ENCODE measurements at regions of chr12 and their contacts with region 1.

Region 1: GRCh38 chr12:98516184-98516873 is 939 bp downstream of the TMPO start:
- DNase-seq: peak; percentile 83 to 93 (median 88)
- H3K4me3 ChIP-seq: peak overlapping the region; percentile 78 to 98
- H3K4me3 Mint-ChIP-seq: peak overlapping the region; percentile 96 to 100 (median 100)
- H3K27ac ChIP-seq: peak overlapping the region; percentile 94
- H3K27ac Mint-ChIP-seq: peak overlapping the region; percentile 97 to 100 (median 99)
- H3K4me1 ChIP-seq: peaks cover 64% of the 10 kb centered on the region
- H3K4me1 Mint-ChIP-seq: peaks cover 26 to 78% (median 47%) of the 10 kb centered on the region in 4 donors
- H3K27me3 ChIP-seq: no peaks in the 10 kb centered on the region
- H3K27me3 Mint-ChIP-seq: peaks cover 0 to 3% of the 10 kb centered on the region in 2 donors

Region 2: GRCh38 chr12:98424726-98425401 is 91.5 kb before region 1 on chr12:
- CTCF ChIA-PET with region 1: interaction called, 4 read pairs
- POLR2A ChIA-PET with region 1: interaction called, 4 read pairs
- intact Hi-C with region 1: loop called (anchors 1 kb)
- DNase-seq: peak in 4 of 5 donors; percentile 35 to 46 (median 40)
- H3K4me3 ChIP-seq: no peak overlapping the region
- H3K4me3 Mint-ChIP-seq: no peak overlapping the region
- H3K27ac ChIP-seq: no peak overlapping the region
- H3K27ac Mint-ChIP-seq: no peak overlapping the region
- H3K4me1 ChIP-seq: no peaks in the 10 kb centered on the region
- H3K4me1 Mint-ChIP-seq: peaks cover 0 to 3% (median 0%) of the 10 kb centered on the region in 4 donors
- H3K27me3 ChIP-seq: no peaks in the 10 kb centered on the region
- H3K27me3 Mint-ChIP-seq: peaks cover 3% of the 10 kb centered on the region in 2 donors

Region 3: GRCh38 chr12:98503592-98504367 is 12.5 kb before region 1 on chr12:
- CTCF ChIA-PET with region 1: interaction called, 14 read pairs
- POLR2A ChIA-PET with region 1: interaction called, 175 read pairs
- intact Hi-C with region 1: loop called (anchors 1 kb)
- DNase-seq: peak; percentile 90 to 94 (median 93)
- H3K4me3 ChIP-seq: peak overlapping the region; percentile 72 to 93
- H3K4me3 Mint-ChIP-seq: peak overlapping the region; percentile 95 to 99 (median 98)
- H3K27ac ChIP-seq: peak overlapping the region; percentile 85
- H3K27ac Mint-ChIP-seq: peak overlapping the region; percentile 98 to 100 (median 100)
- H3K4me1 ChIP-seq: peaks cover 16% of the 10 kb centered on the region
- H3K4me1 Mint-ChIP-seq: peaks cover 17 to 42% (median 29%) of the 10 kb centered on the region in 4 donors
- H3K27me3 ChIP-seq: no peaks in the 10 kb centered on the region
- H3K27me3 Mint-ChIP-seq: peaks cover 4 to 15% of the 10 kb centered on the region in 2 donors

Region 4: DNA sequence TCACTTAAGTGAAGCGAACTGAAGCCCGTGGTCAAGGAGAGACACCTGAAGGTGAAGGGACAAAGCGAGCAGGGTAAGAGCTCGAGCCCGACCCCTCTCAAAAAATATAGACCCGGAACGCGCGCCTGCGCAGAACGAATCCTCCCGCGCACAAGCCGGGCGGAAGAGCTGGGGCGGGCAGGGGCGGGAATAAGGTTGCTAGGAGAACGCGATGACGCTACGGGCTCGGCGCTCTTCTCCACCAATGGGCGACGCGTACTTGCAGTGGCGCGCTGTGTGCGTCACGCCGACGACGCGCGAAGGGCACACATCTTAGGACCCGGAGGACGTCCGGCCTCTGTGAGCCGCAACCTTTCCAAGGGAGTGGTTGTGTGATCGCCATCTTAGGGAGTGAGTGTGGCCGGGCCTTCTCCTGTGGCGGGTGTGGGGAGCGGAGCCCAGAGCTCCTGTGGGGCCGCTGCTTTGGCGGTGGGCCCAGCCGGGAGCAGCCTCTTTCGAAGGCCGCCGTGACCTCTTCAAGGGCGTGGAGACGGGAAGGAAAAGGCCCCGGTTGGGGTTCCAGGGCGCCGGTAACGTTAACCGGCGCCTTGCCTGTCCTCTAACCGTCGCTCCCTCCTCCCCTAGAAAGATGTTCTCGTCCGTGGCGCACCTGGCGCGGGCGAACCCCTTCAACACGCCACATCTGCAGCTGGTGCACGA is 77.2 kb after region 1 on chr12 and contains the start of gene SLC25A3:
- CTCF ChIA-PET with region 1: interaction called, 7 read pairs
- POLR2A ChIA-PET with region 1: interaction called, 44 read pairs
- intact Hi-C with region 1: loop called (anchors 5 kb)
- DNase-seq: peak; percentile 92 to 96 (median 95)
- H3K4me3 ChIP-seq: peak within 1 kb of the TSS; percentile 71 to 79
- H3K4me3 Mint-ChIP-seq: peak within 1 kb of the TSS; percentile 90 to 98 (median 96)
- H3K27ac ChIP-seq: peak within 1 kb of the TSS; percentile 94
- H3K27ac Mint-ChIP-seq: peak within 1 kb of the TSS; percentile 91 to 99 (median 98)
- H3K4me1 ChIP-seq: peaks cover 34% of the 10 kb centered on the region
- H3K4me1 Mint-ChIP-seq: peaks cover 19 to 48% (median 31%) of the 10 kb centered on the region in 4 donors
- H3K27me3 ChIP-seq: no peaks in the 10 kb centered on the region
- H3K27me3 Mint-ChIP-seq: no peaks in the 10 kb centered on the region
- total RNA-seq, gene SLC25A3: 213 to 227 TPM

Region 5: GRCh38 chr12:98618952-98619351 is 102.6 kb after region 1 on chr12:
- CTCF ChIA-PET with region 1: no interaction called
- POLR2A ChIA-PET with region 1: no interaction called
- intact Hi-C with region 1: no loop called
- DNase-seq: no peak
- H3K4me3 ChIP-seq: no peak overlapping the region
- H3K4me3 Mint-ChIP-seq: no peak overlapping the region
- H3K27ac ChIP-seq: no peak overlapping the region
- H3K27ac Mint-ChIP-seq: no peak overlapping the region
- H3K4me1 ChIP-seq: no peaks in the 10 kb centered on the region
- H3K4me1 Mint-ChIP-seq: peaks cover 0 to 6% (median 0%) of the 10 kb centered on the region in 4 donors
- H3K27me3 ChIP-seq: no peaks in the 10 kb centered on the region
- H3K27me3 Mint-ChIP-seq: no peaks in the 10 kb centered on the region

Region 6: DNA sequence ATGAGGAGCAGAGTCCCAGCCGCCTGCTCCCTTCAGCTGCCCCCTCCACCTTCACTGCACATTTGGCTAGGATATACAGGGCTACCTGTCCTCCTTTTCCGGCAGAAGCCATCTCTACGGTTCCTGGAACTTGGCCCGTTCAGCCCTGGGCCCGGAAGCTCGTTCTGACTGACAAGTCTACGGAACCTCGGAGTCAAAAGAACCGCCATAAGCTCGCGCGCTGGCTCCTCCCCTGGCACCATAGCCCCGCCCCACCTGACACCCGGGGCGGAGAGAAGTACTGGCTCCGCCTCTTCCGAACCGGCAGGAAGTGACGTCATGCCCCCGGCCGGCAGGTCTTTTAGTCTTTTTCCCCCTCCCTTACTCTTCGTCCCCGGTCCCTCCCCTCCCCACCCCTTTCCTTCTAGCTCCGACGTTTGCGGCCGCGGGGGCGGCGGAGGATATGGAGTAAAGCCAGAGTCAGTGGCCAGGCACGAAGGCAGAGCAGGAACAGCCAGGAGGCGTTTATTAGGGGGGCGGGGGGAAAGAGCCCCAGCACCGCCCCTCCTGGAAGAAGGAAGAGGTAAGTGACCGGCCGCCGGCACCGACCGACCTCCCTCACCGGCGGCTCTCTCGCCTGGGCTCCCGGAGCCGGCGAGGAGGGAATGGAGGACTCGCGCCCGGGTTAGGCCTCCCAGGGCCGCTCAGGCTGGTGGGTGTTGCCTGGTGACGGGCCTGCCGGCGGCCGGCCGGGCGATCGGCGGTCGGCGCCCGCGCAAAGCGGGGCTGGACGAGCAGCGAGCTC is 1750.7 kb after region 1 on chr12 and contains the starts of genes DEPDC4 and SCYL2:
- CTCF ChIA-PET with region 1: no interaction called
- POLR2A ChIA-PET with region 1: no interaction called
- intact Hi-C with region 1: loop called (anchors 5 kb)
- DNase-seq: peak; percentile 93 to 98 (median 96)
- H3K4me3 ChIP-seq: peak within 1 kb of the TSS; percentile 26 to 90
- H3K4me3 Mint-ChIP-seq: peak within 1 kb of the TSS; percentile 97 to 100 (median 99)
- H3K27ac ChIP-seq: peak within 1 kb of the TSS; percentile 95
- H3K27ac Mint-ChIP-seq: peak within 1 kb of the TSS; percentile 95 to 100 (median 99)
- H3K4me1 ChIP-seq: peaks cover 46% of the 10 kb centered on the region
- H3K4me1 Mint-ChIP-seq: peaks cover 19 to 44% (median 32%) of the 10 kb centered on the region in 4 donors
- H3K27me3 ChIP-seq: no peaks in the 10 kb centered on the region
- H3K27me3 Mint-ChIP-seq: no peaks in the 10 kb centered on the region
- total RNA-seq, gene DEPDC4: 0.38 to 1.4 TPM
- total RNA-seq, gene SCYL2: 47.8 to 52.5 TPM

Measured in CD4-positive, alpha-beta memory T cell (primary cell).